WTC11 (cell line): ENCODE measurements at regions of chr3 and their contacts with region 1.

Region 1: GRCh38 chr3:148955544-148956346 is 35.6 kb upstream of the GYG1 start:
- DNase-seq: no peak
- ATAC-seq: peak; percentile 43
- H3K4me3 Mint-ChIP-seq: no peak overlapping the region
- H3K27ac Mint-ChIP-seq: peak overlapping the region; percentile 8
- H3K4me1 Mint-ChIP-seq: peaks cover 34% of the 10 kb centered on the region
- H3K27me3 Mint-ChIP-seq: no peaks in the 10 kb centered on the region
- CTCF ChIP-seq: no peak

Region 2: GRCh38 chr3:148970271-148970670 is 14.5 kb after region 1 on chr3:
- CTCF ChIA-PET with region 1: interaction called, 13 read pairs
- POLR2A ChIA-PET with region 1: no interaction called
- DNase-seq: no peak
- ATAC-seq: no peak
- H3K4me3 Mint-ChIP-seq: no peak overlapping the region
- H3K27ac Mint-ChIP-seq: no peak overlapping the region
- H3K4me1 Mint-ChIP-seq: peaks cover 3% of the 10 kb centered on the region
- H3K27me3 Mint-ChIP-seq: no peaks in the 10 kb centered on the region
- CTCF ChIP-seq: no peak

Region 3: DNA sequence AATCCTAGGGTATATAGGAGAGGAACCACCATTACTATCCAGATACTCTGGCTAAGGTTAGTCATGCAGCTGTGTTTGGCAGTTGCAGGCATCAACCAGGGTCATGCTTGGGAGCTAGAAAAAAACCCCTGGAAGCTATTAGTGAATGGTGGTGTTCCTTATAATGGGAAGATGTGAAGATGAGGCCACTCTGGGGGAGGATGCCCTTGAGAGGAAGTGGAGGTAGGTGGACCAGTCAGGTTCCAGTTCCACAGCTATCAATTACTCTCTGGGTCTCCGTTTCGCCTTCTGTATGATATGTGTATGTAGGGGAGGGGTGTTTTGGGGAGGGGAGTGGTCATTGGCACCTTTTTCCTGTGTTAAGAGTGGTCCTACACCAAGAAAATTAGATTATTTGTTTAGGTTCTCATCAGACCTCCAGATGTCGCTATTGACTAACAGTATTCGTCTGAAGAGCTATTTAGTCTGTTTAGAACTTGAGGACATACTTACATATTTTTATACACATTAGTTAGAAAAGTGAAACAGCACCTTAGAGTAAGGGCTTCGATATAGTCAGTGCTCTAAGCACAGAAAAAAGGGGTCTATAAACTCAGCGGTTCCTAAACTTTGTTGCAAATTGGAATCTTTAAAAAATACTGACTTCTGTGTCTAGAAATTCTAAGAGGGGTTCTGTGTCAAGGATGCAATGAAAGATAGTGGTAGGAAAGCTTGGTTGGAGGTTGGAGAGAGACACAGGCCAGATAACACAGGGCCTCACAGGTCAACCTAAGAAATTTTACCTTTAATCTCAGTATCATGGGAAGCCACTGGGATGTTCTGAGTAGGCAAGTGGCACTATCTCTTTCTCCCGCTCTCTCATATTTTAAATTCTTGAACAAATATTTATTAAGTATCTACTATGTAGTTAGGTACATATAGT is 164.6 kb after region 1 on chr3:
- CTCF ChIA-PET with region 1: interaction called, 64 read pairs
- POLR2A ChIA-PET with region 1: interaction called, 6 read pairs
- DNase-seq: no peak
- ATAC-seq: peak; percentile 92
- H3K4me3 Mint-ChIP-seq: no peak overlapping the region
- H3K27ac Mint-ChIP-seq: no peak overlapping the region
- H3K4me1 Mint-ChIP-seq: peaks cover 4% of the 10 kb centered on the region; the same call in 1 of the 2 replicates
- H3K27me3 Mint-ChIP-seq: no peaks in the 10 kb centered on the region
- CTCF ChIP-seq: peak; percentile 49; the same call in 1 of the 2 replicates

Region 4: GRCh38 chr3:149279784-149280183 is 324.0 kb after region 1 on chr3:
- CTCF ChIA-PET with region 1: interaction called, 13 read pairs
- POLR2A ChIA-PET with region 1: no interaction called
- DNase-seq: no peak
- ATAC-seq: no peak
- H3K4me3 Mint-ChIP-seq: no peak overlapping the region
- H3K27ac Mint-ChIP-seq: no peak overlapping the region
- H3K4me1 Mint-ChIP-seq: peaks cover 24% of the 10 kb centered on the region
- H3K27me3 Mint-ChIP-seq: no peaks in the 10 kb centered on the region
- CTCF ChIP-seq: no peak

Region 5: DNA sequence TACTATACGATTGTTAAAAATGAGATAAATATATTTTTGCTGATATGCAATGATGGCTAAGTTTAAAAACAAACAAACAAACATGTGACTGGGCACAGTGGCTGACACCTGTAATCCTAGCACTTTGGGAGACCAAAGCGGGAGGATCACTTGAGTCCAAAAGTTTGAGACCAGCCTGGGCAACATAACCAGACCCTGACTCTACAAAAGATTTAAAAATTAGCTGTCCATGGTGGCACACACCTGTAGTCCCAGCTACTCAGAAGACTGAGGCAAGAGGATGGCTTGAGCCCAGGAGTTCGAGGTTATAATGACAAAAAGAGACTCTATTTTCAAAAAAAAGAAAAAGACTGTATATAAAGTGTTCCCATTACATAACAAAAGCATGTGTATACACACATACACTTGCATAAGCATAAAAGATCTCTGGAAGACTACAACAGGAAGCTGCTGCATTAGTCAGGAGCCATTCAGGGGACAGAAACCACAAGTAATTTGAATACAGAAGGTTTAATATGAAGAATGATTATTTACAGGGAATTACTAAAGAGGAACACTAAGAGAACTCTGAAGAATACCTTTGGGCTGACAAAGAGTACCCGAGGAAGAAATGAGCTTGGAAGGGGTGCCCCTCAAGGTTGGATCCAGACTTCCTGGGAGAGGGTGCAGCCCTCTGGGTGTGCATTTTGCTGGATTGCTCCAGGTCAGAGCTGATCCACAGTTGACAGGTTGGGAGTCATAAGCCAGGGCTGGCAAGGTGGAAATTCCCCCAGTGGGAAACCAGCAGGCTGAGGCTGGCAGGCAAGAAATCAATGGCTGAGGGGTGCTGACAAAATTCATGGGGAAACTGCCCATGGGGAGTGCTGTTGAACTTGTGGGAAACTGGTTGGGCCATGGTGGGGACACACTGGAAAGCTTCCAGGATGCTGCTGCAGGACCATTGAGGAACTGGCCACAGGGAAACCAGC is 387.0 kb after region 1 on chr3:
- CTCF ChIA-PET with region 1: interaction called, 15 read pairs
- POLR2A ChIA-PET with region 1: no interaction called
- DNase-seq: no peak
- ATAC-seq: no peak
- H3K4me3 Mint-ChIP-seq: no peak overlapping the region
- H3K27ac Mint-ChIP-seq: no peak overlapping the region
- H3K4me1 Mint-ChIP-seq: peaks cover 38% of the 10 kb centered on the region
- H3K27me3 Mint-ChIP-seq: no peaks in the 10 kb centered on the region
- CTCF ChIP-seq: no peak